G401 (cell line): ENCODE measurements at regions of chr9 and their contacts with region 1.

Region 1: DNA sequence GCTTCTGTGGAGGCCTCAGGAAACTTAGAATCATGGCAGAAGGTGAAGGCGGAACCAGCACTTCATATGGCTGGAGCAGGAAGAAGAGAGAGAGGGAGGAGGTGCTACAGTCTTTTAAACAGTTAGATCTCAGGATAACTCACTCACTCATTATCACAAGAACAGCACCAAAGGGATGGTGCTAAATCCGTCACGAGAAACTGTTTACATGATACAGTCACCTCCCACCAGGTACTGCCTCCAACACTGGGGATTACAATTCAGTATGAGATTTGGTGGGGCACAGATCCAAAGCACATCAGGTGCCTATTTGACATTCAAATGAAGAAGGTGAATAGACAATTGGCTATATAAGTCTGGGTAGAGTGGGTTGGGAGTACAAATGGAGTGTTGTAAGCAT is 35.2 kb downstream of the FKTN start:
- DNase-seq: no peak

Region 2: GRCh38 chr9:105708405-105708804 is 115.3 kb after region 1 on chr9:
- in situ Hi-C with region 1: loop called (anchors 25 kb)
- DNase-seq: no peak